Motor neuron (in vitro differentiated cells): ENCODE measurements at regions of chr2 and their contacts with region 1.

Region 1: GRCh38 chr2:158179660-158180059 is 78.0 kb downstream of the UPP2 start:
- ATAC-seq: peak in 1 of 8 experiments; percentile 78
- H3K4me3 ChIP-seq: no peak overlapping the region
- H3K27ac ChIP-seq: no peak overlapping the region
- H3K4me1 ChIP-seq: no peaks in the 10 kb centered on the region

Region 2: DNA sequence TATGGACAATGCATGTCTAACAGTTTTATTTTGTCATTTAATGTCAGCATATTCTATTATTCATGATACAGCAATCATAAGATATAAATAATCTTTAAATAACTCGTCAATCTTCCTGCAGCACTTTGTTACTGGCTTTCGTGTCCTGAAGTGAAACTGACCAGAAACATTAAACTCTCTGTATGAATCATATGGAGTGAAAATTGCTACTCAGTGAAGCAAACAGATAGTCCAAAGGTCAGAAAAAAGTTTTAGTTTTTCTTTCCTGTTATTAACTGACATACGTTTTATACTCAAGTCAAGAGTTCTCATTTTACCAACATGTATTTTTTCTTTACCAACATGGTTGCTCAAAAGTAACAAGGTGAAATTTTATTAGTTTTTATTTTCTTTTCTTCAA is 1028.9 kb before region 1 on chr2:
- in situ Hi-C with region 1: no loop called
- ATAC-seq: no peak
- H3K4me3 ChIP-seq: no peak overlapping the region
- H3K27ac ChIP-seq: no peak overlapping the region
- H3K4me1 ChIP-seq: peaks cover 0 to 3% of the 10 kb centered on the region in 2 donors

Region 3: GRCh38 chr2:157256626-157257025 is 923.0 kb before region 1 on chr2:
- in situ Hi-C with region 1: no loop called
- ATAC-seq: no peak
- H3K4me3 ChIP-seq: no peak overlapping the region
- H3K27ac ChIP-seq: no peak overlapping the region
- H3K4me1 ChIP-seq: peaks cover 0 to 3% of the 10 kb centered on the region in 2 donors

Region 4: DNA sequence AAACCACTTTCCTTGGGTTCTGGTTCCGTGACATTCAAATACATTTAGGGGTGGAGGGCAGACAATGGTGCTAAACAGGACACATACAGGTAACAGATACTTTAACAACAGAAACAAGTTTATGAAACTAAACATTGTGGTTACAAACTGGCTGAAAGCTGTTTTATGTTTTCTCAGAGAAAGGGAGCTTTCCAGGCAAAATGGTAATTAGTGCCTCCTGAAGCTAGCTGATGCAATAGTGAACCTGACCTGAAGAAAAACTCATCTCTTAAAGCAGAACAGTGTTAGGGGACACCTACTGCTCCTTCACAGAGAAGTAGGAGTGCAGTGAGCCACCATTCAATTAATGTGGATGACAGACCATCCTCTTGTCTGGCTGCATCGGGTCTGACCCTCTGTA is 138.0 kb after region 1 on chr2:
- in situ Hi-C with region 1: no loop called
- ATAC-seq: peak in 6 of 8 experiments; percentile 27 to 65 (median 42)
- H3K4me3 ChIP-seq: no peak overlapping the region
- H3K27ac ChIP-seq: no peak overlapping the region
- H3K4me1 ChIP-seq: peaks cover 4 to 7% of the 10 kb centered on the region in 2 donors

Region 5: DNA sequence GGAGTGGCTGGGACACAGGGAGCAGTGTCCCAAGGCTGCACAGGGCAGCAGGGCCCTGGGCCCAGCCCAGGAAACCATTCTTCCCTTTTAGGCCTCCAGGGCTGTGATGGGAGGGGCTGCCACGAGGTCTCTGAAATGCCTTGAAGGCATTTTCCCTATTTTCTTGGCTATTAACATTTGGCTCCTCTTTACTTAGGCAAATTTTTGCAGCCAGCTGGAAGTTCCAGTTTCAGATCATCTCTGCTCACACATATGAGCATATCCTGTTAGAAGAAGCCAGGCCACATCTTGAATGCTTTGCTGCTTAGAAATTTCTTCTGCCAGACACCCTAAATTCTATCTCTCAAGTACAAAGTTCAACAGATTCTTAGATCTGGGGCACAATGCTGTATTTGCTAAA is 236.5 kb after region 1 on chr2:
- in situ Hi-C with region 1: no loop called
- ATAC-seq: peak in 2 of 8 experiments; percentile 39 to 83
- H3K4me3 ChIP-seq: no peak overlapping the region
- H3K27ac ChIP-seq: no peak overlapping the region
- H3K4me1 ChIP-seq: no peaks in the 10 kb centered on the region

Region 6: DNA sequence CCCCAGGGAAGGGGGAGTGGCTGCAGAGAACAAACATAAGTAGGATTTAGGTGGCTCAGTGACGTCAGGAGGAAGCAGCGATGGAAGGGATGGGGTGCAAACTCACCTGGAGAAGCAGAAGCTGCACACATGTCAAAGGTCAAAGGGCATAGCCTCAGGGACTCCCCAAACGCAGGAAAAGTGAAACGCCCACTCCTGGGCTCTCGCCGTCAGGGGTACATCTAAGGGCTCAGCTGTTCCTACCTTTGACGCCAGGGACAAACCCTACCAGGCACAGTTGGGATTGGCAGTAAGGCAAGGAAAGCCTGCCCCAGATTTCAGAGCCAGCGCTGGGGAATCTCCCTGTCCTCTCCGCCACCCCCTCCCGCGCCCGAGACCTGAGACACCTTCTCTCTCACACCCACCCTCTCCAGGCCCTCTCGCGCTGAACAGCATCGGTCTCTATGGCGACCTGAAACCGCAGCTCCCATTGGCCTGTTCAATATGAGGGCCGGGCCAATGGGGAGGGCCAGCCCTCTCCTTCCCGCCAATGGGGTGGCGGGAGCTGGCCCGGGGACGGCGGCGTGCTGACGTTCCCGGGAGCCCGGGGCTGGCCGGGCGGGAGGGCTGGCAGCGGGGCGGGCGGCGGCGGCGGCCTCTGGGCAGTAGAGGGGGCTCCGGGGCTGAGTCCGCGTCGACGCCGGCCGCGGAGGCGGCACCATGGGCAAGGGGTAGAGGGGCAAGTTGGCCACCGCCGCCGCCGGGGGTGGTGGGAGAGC is 276.8 kb after region 1 on chr2 and contains the starts of genes CCDC148 and PKP4:
- in situ Hi-C with region 1: loop called in 2 of 9 experiments (anchors 25 kb)
- ATAC-seq: peak; percentile 76 to 89 (median 86)
- H3K4me3 ChIP-seq: peak within 1 kb of the TSS; percentile 67 to 89 (median 83)
- H3K27ac ChIP-seq: peak within 1 kb of the TSS; percentile 53 to 73
- H3K4me1 ChIP-seq: peaks cover 0 to 15% of the 10 kb centered on the region in 2 donors
- total RNA-seq, gene CCDC148: 0.45 to 7.0 (median 1.5) TPM
- total RNA-seq, gene PKP4: 17.8 to 43.0 (median 29.1) TPM